Esophagus squamous epithelium (tissue), 5 donors: ENCODE measurements at regions of chr1 and their contacts with region 1.

Region 1: GRCh38 chr1:4652631-4653327 is 1.6 kb upstream of the AJAP1 start:
- DNase-seq: no peak
- H3K4me3 ChIP-seq: peak overlapping the region in 1 of 4 donors; percentile 12
- H3K27ac ChIP-seq: no peak overlapping the region
- H3K4me1 ChIP-seq: peaks cover 0 to 52% (median 6%) of the 10 kb centered on the region in 3 donors
- H3K27me3 ChIP-seq: peaks cover 6 to 95% (median 16%) of the 10 kb centered on the region in 4 donors
- CTCF ChIP-seq: peak; percentile 70 to 95 (median 80)
- POLR2A ChIP-seq: no peak

Region 2: GRCh38 chr1:3910857-3911845 is 741.6 kb before region 1 on chr1:
- intact Hi-C with region 1: loop called (anchors 10 kb)
- DNase-seq: no peak
- H3K4me3 ChIP-seq: peak overlapping the region in 1 of 4 donors; percentile 38
- H3K27ac ChIP-seq: no peak overlapping the region
- H3K4me1 ChIP-seq: peaks cover 4 to 13% (median 4%) of the 10 kb centered on the region in 3 donors
- H3K27me3 ChIP-seq: peaks cover 0 to 41% (median 0%) of the 10 kb centered on the region in 4 donors
- CTCF ChIP-seq: peak; percentile 71 to 88 (median 80)
- POLR2A ChIP-seq: no peak